ENCODE measurements at regions of chr9 and their contacts with region 1.

Region 1: GRCh38 chr9:78035383-78035993 is 3.9 kb upstream of the GNAQ start:
- DNase-seq: peak; percentile 66
- ATAC-seq: no peak
- H3K4me3 Mint-ChIP-seq: no peak overlapping the region
- H3K27ac Mint-ChIP-seq: no peak overlapping the region
- H3K4me1 Mint-ChIP-seq: peaks cover 21% of the 10 kb centered on the region
- H3K27me3 Mint-ChIP-seq: peaks cover 21% of the 10 kb centered on the region

Region 2: GRCh38 chr9:77841739-77842386 is 193.6 kb before region 1 on chr9:
- CTCF ChIA-PET with region 1: interaction called, 10 read pairs
- DNase-seq: no peak
- ATAC-seq: peak; percentile 55
- H3K4me3 Mint-ChIP-seq: no peak overlapping the region
- H3K27ac Mint-ChIP-seq: no peak overlapping the region
- H3K4me1 Mint-ChIP-seq: peaks cover 10% of the 10 kb centered on the region
- H3K27me3 Mint-ChIP-seq: peaks cover 2% of the 10 kb centered on the region

Region 3: GRCh38 chr9:77884395-77884851 is 151.1 kb before region 1 on chr9:
- CTCF ChIA-PET with region 1: no interaction called
- DNase-seq: no peak
- ATAC-seq: no peak
- H3K4me3 Mint-ChIP-seq: no peak overlapping the region
- H3K27ac Mint-ChIP-seq: no peak overlapping the region
- H3K4me1 Mint-ChIP-seq: peaks cover 16% of the 10 kb centered on the region
- H3K27me3 Mint-ChIP-seq: no peaks in the 10 kb centered on the region

Region 4: GRCh38 chr9:77977210-77977611 is 58.3 kb before region 1 on chr9:
- CTCF ChIA-PET with region 1: interaction called, 39 read pairs
- DNase-seq: peak; percentile 69
- ATAC-seq: peak; percentile 63
- H3K4me3 Mint-ChIP-seq: no peak overlapping the region
- H3K27ac Mint-ChIP-seq: peak overlapping the region; percentile 47
- H3K4me1 Mint-ChIP-seq: peaks cover 52% of the 10 kb centered on the region
- H3K27me3 Mint-ChIP-seq: no peaks in the 10 kb centered on the region

Region 5: GRCh38 chr9:78074385-78075291 is 39.1 kb after region 1 on chr9:
- CTCF ChIA-PET with region 1: interaction called, 12 read pairs
- DNase-seq: peak; percentile 58
- ATAC-seq: peak; percentile 67
- H3K4me3 Mint-ChIP-seq: peak overlapping the region; percentile 3
- H3K27ac Mint-ChIP-seq: peak overlapping the region; percentile 82
- H3K4me1 Mint-ChIP-seq: peaks cover 40% of the 10 kb centered on the region
- H3K27me3 Mint-ChIP-seq: no peaks in the 10 kb centered on the region

Region 6: GRCh38 chr9:78121488-78121887 is 86.0 kb after region 1 on chr9:
- CTCF ChIA-PET with region 1: interaction called, 24 read pairs
- DNase-seq: peak; percentile 57
- ATAC-seq: no peak
- H3K4me3 Mint-ChIP-seq: no peak overlapping the region
- H3K27ac Mint-ChIP-seq: no peak overlapping the region
- H3K4me1 Mint-ChIP-seq: peaks cover 13% of the 10 kb centered on the region
- H3K27me3 Mint-ChIP-seq: peaks cover 3% of the 10 kb centered on the region